Activated B cell treated with CpG ODN at 0.5 μM for 24 hours (primary cell): ENCODE measurements at regions of chr19 and their contacts with region 1.

Region 1: DNA sequence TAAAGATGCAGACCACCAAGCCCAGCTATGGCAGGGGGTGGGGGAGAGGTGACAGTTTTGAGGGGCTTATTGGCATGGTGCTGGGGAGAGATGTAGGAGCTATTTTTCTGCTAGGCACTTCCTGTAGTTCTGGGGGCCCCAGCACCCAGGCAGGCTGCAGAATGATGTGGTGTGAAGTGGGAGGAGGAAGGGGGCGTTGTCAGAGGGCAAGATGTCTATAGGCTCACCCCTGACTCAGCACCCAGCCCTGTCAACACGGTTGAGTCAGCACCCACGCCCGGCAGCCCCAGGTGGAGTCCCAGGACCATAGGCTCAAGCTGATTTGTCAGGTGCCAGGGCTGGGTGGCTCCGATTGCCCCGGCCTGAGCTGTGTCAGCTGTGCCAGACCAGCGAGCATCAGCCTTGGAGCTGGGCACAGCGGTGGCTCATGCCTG is 5.8 kb downstream of the KLF2 start:
- DNase-seq: peak; percentile 70
- ATAC-seq: peak; percentile 77
- H3K4me3 Mint-ChIP-seq: peak overlapping the region; percentile 42
- H3K27ac Mint-ChIP-seq: peak overlapping the region; percentile 94
- H3K4me1 Mint-ChIP-seq: peaks cover 63% of the 10 kb centered on the region
- H3K27me3 Mint-ChIP-seq: no peaks in the 10 kb centered on the region
- CTCF ChIP-seq: no peak

Region 2: GRCh38 chr19:16252459-16253205 is 77.8 kb before region 1 on chr19:
- CTCF ChIA-PET with region 1: interaction called, 41 read pairs
- POLR2A ChIA-PET with region 1: interaction called, 445 read pairs
- intact Hi-C with region 1: no loop called
- DNase-seq: no peak
- ATAC-seq: peak; percentile 65
- H3K4me3 Mint-ChIP-seq: peak overlapping the region; percentile 17
- H3K27ac Mint-ChIP-seq: no peak overlapping the region
- H3K4me1 Mint-ChIP-seq: peaks cover 55% of the 10 kb centered on the region
- H3K27me3 Mint-ChIP-seq: no peaks in the 10 kb centered on the region
- CTCF ChIP-seq: no peak

Region 3: DNA sequence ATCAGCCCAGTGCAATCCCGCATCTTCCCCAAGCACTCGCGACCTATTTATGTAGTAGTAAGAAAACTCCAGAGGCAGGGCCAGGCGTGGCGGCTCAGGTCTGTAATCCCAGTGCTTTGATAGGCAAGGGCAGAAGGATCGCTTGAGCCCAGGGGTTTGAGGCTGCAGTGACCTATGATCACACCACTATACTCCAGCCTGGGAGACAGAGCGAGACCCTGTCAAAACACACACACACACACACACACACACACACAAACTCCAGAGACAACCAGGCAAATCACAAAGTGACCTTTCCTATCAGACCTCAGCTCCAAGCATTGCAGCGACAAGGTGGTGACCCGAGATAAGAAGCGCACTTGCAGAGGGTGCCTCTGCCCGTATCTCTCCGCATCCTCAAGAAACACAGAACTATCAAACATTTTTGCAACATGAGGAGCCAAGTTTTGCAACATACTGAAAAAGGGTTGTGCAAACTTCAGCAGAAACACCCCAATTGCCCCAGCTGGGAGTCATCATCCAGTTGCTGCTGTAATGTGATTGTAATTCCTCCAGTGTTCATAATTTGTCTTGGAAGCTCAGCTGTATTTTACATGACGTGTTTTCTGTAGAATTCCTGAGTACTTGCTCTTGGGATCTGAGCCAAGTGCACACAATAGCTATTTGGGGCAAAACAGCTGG is 14.4 kb before region 1 on chr19:
- CTCF ChIA-PET with region 1: no interaction called
- POLR2A ChIA-PET with region 1: interaction called, 11 read pairs
- intact Hi-C with region 1: no loop called
- DNase-seq: no peak
- ATAC-seq: no peak
- H3K4me3 Mint-ChIP-seq: no peak overlapping the region
- H3K27ac Mint-ChIP-seq: peak overlapping the region; percentile 16
- H3K4me1 Mint-ChIP-seq: peaks cover 27% of the 10 kb centered on the region
- H3K27me3 Mint-ChIP-seq: no peaks in the 10 kb centered on the region
- CTCF ChIP-seq: no peak

Region 4: DNA sequence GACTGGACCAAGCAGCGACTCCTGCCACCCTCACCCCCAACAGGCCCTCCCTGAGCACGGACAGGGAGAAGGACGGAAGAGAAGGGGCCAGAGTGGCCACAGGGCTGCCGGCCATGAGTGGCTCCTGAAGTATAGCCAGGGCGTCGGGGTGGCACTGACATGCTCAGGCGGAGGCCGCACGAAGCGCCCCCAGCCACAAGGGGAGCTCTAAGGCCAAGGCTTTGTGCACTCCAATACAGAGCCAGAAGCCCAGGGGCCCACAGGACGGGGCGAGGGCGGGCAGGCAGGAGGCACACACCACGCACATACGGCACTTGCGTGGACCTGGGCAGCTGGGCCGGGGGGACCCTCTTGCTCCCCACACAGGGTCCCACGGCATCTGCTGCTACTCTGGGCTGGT is 46.3 kb after region 1 on chr19:
- CTCF ChIA-PET with region 1: interaction called, 32 read pairs
- POLR2A ChIA-PET with region 1: interaction called, 828 read pairs
- intact Hi-C with region 1: loop called (anchors 1 kb)
- DNase-seq: no peak
- ATAC-seq: peak; percentile 63
- H3K4me3 Mint-ChIP-seq: no peak overlapping the region
- H3K27ac Mint-ChIP-seq: peak overlapping the region; percentile 6
- H3K4me1 Mint-ChIP-seq: peaks cover 78% of the 10 kb centered on the region
- H3K27me3 Mint-ChIP-seq: no peaks in the 10 kb centered on the region
- CTCF ChIP-seq: no peak

Region 5: DNA sequence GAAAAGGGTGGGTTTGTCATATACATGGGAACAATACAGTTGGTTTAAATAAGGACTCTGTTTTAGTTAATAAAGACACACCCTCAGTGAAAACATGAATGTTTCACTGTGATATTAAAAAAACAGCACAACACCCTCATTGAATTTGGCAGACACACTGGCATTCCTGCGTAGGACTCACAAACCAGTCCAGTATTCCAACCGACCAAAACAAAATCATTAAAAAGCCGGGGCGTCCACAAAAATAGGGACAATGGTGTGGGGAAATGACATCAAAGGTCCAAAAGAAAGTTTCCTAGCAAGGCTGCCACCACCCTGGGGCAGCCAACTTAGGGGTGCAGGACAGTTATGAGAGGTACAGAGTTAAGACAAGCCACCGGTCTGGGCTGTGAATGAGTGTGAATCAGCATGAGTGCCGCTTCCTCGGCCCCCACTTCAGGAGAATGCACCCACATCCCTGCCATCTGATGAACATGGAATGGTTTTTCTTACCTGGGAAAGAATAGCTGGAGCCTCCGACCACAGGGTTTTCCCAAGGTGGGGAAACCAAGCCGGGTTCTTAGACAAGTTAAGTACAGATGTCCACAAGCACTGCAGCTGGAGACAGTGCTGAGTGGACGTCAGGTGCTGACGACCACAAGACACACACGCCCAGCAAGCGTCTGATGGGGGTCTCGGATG is 67.5 kb after region 1 on chr19:
- CTCF ChIA-PET with region 1: no interaction called
- POLR2A ChIA-PET with region 1: interaction called, 23 read pairs
- intact Hi-C with region 1: no loop called
- DNase-seq: no peak
- ATAC-seq: no peak
- H3K4me3 Mint-ChIP-seq: peak overlapping the region; percentile 59
- H3K27ac Mint-ChIP-seq: peak overlapping the region; percentile 91
- H3K4me1 Mint-ChIP-seq: peaks cover 77% of the 10 kb centered on the region
- H3K27me3 Mint-ChIP-seq: no peaks in the 10 kb centered on the region
- CTCF ChIP-seq: no peak